ENCODE measurements at regions of chr22 and their contacts with region 1.

Region 1: GRCh38 chr22:30005213-30005857 is 74.9 kb upstream of the HORMAD2 start:
- DNase-seq: peak; percentile 74 to 83
- H3K4me3 ChIP-seq: no peak overlapping the region
- H3K4me1 ChIP-seq: peaks cover 25% of the 10 kb centered on the region
- H3K27me3 ChIP-seq: no peaks in the 10 kb centered on the region

Region 2: GRCh38 chr22:29397791-29398190 is 607.5 kb before region 1 on chr22:
- in situ Hi-C with region 1: no loop called
- DNase-seq: no peak
- H3K4me3 ChIP-seq: no peak overlapping the region
- H3K4me1 ChIP-seq: peaks cover 11% of the 10 kb centered on the region
- H3K27me3 ChIP-seq: no peaks in the 10 kb centered on the region

Region 3: DNA sequence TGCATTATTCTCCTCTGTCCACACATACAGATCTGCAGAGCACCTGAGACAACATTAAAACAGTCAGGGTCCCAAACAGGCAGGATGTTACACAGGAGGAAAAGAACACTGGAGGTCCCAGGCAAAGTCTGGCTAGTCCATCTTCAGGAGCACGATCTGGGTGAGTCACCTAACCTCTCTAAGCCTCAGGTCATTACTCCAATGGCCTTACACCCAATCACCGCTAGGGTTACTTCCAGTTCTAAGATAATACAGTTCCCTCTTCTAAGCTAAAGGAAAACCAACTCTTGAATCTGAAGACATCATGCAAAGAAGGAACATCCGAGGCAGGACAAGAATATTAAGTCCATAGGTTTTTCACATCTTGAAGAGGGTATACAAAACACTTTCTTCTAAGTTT is 191.8 kb before region 1 on chr22:
- in situ Hi-C with region 1: loop called (anchors 10 kb)
- DNase-seq: no peak
- H3K4me3 ChIP-seq: no peak overlapping the region
- H3K4me1 ChIP-seq: no peaks in the 10 kb centered on the region
- H3K27me3 ChIP-seq: no peaks in the 10 kb centered on the region

Region 4: GRCh38 chr22:29901354-29901753 is 104.0 kb before region 1 on chr22:
- in situ Hi-C with region 1: no loop called
- DNase-seq: no peak
- H3K4me3 ChIP-seq: no peak overlapping the region
- H3K4me1 ChIP-seq: peaks cover 6% of the 10 kb centered on the region
- H3K27me3 ChIP-seq: no peaks in the 10 kb centered on the region

Region 5: DNA sequence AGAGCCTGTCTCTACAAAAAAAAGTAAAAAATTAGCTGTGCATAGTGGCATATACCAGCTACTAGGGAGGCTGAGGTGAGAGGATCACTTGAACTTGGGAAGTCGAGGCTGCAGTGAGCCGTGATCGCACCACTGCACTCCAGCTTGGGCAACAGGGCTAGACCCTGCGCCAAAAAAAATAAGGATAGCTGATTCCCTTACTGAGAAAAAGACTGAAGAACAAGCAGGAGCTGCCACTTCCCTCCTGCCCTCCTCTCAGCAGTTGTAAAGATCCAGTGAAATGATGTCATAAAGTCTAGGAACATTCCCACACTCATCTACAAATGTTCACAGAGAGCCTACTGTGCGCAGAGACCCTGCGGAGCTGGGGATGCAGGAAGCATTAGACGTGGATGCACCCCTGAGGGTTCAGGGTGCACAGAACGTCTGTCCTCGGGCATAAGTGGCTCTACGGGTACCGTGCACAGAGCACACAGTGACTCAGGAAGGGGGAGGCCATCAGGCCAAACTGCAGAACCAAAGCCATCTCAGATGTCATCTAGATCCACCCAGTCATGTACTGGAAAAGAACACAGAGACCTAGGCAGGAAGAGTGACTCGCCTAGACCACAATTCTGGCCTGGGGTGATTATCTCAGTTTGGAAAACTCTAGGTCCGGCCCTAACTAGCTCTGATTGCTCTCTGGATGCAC is 403.2 kb after region 1 on chr22:
- in situ Hi-C with region 1: no loop called
- DNase-seq: no peak
- H3K4me3 ChIP-seq: no peak overlapping the region
- H3K4me1 ChIP-seq: no peaks in the 10 kb centered on the region
- H3K27me3 ChIP-seq: no peaks in the 10 kb centered on the region

Region 6: DNA sequence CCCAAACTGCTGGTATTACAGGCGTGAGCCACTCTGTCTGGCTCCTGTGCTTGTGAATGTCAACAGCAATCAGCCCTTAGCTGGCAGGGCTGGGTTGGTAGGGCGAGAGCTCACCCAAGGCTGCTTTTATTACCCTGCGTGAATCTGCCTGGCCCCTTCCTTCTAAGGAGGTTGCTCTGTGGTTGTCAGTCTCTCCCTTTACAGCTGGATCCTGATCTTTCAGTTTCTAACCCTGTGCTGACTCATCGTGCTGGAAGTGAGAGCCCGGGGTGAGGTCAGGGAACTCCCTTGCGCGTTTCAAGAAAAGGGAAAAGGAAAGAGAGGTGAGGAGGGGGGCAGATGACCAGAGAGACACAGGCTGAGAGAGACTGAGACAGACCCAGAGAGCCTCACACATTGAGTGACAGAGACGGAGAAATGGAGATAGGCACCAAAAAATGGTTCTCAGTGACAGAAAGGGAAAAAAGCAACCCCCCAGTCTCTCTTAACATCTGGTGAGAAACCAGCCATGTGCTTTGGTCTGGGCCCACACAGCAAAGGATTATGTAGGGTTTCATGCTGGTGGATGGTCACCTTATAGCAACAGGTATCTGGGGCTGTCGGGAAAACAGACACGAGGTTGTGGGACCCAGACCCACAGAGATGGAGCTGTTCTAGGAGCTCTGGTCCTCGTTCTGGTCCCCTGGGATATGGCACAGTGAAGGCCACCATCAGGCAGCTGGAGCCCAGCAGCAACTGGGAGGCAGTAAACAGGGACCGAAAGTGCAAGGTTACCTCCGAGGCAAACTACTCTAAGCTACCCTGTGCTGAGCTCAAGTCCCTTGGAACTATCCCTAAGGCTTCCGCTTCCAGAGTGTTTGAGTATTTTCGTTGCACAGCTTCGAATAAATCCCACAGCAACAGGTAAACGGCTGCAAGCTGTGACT is 604.2 kb after region 1 on chr22:
- in situ Hi-C with region 1: no loop called
- DNase-seq: no peak
- H3K4me3 ChIP-seq: no peak overlapping the region
- H3K4me1 ChIP-seq: peaks cover 11% of the 10 kb centered on the region
- H3K27me3 ChIP-seq: no peaks in the 10 kb centered on the region